ENCODE measurements at regions of chr1 and their contacts with region 1.

Region 1: DNA sequence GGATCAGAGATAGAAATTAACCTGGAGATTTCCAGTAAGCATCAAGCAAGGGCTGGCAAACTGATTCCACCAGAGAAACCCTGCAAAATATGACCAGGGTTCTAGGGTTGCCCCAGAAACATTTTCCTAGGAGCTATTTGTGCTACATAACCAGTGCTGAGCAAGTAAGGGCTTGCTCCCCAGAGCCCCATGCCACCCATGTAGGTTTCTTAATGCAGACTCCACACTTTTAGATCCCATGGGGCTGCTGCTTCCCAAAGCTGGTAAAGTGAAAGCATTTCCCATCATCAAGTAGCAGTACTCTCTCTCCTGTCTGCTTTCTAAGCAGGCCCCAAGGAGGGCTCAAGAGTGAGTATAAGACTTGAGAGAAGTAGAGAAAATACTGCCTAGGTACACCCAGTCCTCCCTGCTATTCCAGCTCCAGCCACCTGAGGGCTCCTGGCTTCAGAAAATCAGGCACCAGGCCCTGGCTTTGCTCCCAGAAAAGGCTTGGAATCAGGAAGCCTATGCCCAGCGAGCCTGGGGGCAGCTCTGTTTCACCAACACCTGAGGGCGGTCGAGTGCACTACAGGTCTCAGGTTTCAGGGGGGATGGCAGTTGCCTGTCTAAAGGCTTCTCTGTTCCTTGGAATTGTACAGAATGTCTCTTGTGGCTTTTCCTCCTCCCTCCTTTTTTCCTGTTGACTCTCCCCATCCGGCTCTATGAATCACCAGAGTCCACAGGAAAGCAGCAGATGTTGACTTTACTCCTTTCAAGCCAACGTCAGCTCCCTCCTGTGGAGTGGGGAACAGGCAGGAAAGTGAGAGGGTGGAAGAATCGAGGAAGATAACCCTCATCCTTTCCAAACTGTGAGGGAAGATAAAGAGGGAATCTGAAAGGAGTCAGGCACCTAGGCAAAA is 6.2 kb upstream of the ANKRD35 start:
- DNase-seq: peak; percentile 100
- ATAC-seq: peak; percentile 92
- H3K4me3 ChIP-seq: peak overlapping the region; percentile 50
- H3K27ac ChIP-seq: peak overlapping the region; percentile 95
- H3K4me1 ChIP-seq: peaks cover 44% of the 10 kb centered on the region
- H3K27me3 ChIP-seq: no peaks in the 10 kb centered on the region
- CTCF ChIP-seq: peak; percentile 100

Region 2: DNA sequence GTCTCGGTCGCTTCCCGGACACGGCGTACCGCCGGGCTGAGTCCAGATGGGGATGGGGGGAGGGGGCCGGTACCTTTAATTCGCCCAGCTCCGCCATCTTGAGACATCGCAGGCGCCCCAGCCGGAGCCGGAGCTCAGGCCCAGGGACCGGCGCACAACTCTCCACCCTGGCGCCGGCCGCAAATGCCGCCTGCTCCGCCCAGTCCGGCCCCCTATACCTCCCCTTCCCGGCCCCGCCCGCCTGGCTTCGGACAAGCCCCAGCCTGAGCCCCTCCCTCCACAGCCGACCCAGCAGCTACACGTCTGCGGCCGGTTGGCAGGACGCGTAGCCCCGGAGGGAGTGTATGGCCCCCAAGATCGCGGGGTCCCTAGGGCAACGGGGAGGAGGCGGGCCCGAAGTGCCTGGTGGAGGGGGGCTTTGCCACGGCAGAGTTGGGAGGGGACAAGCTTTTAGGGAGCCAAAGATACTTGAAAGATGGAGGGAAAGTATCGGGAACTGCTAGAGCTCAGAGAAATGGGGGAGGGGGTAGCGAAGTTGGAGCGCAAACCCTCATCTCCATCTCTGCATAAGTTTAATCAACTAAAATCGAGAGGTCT is 32.8 kb before region 1 on chr1 and contains the start of gene PIAS3:
- CTCF ChIA-PET with region 1: interaction called, 35 read pairs
- POLR2A ChIA-PET with region 1: interaction called, 3 read pairs
- intact Hi-C with region 1: loop called (anchors 1 kb)
- DNase-seq: peak; percentile 95
- ATAC-seq: peak; percentile 88
- H3K4me3 ChIP-seq: peak within 1 kb of the TSS; percentile 79
- H3K27ac ChIP-seq: peak within 1 kb of the TSS; percentile 10
- H3K4me1 ChIP-seq: peaks cover 11% of the 10 kb centered on the region
- H3K27me3 ChIP-seq: no peaks in the 10 kb centered on the region
- CTCF ChIP-seq: no peak
- total RNA-seq, gene PIAS3: 25.2 and 27.2 TPM in 2 replicates

Region 3: DNA sequence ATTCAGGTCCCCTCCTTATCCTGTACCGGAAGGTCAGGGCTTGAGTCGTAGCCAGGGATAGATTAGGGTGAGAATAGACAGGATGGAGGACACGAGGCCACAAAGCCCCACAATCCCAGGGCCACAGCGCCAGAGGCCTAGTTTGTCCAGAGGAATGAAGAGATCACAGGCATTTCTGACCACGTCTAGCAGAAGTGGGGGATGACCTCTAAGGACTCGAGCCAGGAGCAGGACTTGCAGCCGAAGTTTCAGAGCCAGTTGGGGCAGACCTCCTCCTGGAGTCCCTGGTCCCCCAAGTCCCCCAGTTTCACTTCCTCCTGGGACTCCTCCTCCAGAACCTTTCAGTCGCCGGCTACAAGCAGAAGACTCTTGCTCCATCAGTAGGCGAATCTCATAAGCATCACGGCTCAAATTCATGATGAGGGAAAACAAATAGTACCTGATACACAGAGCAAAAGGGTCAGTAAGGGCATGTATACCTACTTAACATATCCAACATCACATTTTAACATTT is 20.3 kb after region 1 on chr1:
- CTCF ChIA-PET with region 1: interaction called, 29 read pairs
- POLR2A ChIA-PET with region 1: interaction called, 5 read pairs
- intact Hi-C with region 1: loop called (anchors 1 kb)
- DNase-seq: no peak
- ATAC-seq: no peak
- H3K4me3 ChIP-seq: no peak overlapping the region
- H3K27ac ChIP-seq: no peak overlapping the region
- H3K4me1 ChIP-seq: peaks cover 17% of the 10 kb centered on the region
- H3K27me3 ChIP-seq: no peaks in the 10 kb centered on the region
- CTCF ChIP-seq: no peak

Region 4: GRCh38 chr1:145957443-145958319 is 65.8 kb after region 1 on chr1 and contains the start of gene LIX1L:
- CTCF ChIA-PET with region 1: interaction called, 5 read pairs
- POLR2A ChIA-PET with region 1: no interaction called
- intact Hi-C with region 1: loop called (anchors 1 kb)
- DNase-seq: peak; percentile 99
- ATAC-seq: peak; percentile 81
- H3K4me3 ChIP-seq: peak within 1 kb of the TSS; percentile 76
- H3K27ac ChIP-seq: 0 out of 2 replicates have a peak within 1 kb of the TSS, but pooled peaks have one; percentile 1
- H3K4me1 ChIP-seq: peaks cover 43% of the 10 kb centered on the region
- H3K27me3 ChIP-seq: no peaks in the 10 kb centered on the region
- CTCF ChIP-seq: no peak
- total RNA-seq, gene LIX1L: 12.5 and 13.6 TPM in 2 replicates

Region 5: DNA sequence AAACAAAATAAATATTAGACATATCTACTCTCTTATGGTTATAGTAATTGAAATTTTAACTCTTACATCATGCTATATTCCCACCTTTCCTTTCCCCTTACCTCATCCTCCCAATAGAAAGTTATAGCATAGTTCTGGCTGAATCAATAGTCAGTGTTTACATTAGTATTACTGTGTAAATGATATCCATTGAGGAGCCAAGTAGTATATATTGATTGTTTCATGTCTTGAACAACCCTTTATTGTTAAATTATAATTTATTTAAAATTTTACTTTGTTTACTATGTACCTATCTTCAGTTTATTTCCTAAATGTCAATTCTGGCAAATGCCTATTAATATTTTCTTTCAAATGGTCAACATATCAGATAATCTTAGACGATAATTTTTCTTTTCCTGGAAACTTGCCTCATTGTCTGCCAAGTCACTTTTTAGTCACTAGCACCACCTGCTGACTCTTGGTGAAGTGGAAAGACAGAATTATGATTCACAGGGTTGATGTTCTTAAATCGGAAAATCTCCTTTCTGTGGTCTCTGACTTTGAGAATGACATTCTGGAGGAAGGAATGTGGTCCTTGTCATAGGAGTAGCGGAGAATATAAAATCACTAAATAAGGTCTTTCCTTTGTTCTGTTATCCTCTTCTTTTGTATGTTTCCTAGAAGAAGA is 121.0 kb after region 1 on chr1:
- CTCF ChIA-PET with region 1: interaction called, 7 read pairs
- POLR2A ChIA-PET with region 1: no interaction called
- intact Hi-C with region 1: loop called (anchors 1 kb)
- DNase-seq: peak; percentile 96
- ATAC-seq: peak; percentile 79
- H3K4me3 ChIP-seq: no peak overlapping the region
- H3K27ac ChIP-seq: no peak overlapping the region
- H3K4me1 ChIP-seq: peaks cover 4% of the 10 kb centered on the region; the same call in 1 of the 2 replicates
- H3K27me3 ChIP-seq: no peaks in the 10 kb centered on the region
- CTCF ChIP-seq: peak; percentile 98